HepG2 (cell line): ENCODE measurements at regions of chr6 and their contacts with region 1.

Region 1: GRCh38 chr6:56730663-56731529 is 88.2 kb upstream of the DST start:
- DNase-seq: no peak
- ATAC-seq: no peak
- H3K4me3 ChIP-seq: no peak overlapping the region
- H3K27ac ChIP-seq: peak overlapping the region; percentile 76
- H3K4me1 ChIP-seq: peaks cover 72% of the 10 kb centered on the region
- H3K27me3 ChIP-seq: no peaks in the 10 kb centered on the region
- CTCF ChIP-seq: no peak
- EP300 ChIP-seq: no peak
- POLR2A ChIP-seq: no peak
- RAD21 ChIP-seq: no peak

Region 2: DNA sequence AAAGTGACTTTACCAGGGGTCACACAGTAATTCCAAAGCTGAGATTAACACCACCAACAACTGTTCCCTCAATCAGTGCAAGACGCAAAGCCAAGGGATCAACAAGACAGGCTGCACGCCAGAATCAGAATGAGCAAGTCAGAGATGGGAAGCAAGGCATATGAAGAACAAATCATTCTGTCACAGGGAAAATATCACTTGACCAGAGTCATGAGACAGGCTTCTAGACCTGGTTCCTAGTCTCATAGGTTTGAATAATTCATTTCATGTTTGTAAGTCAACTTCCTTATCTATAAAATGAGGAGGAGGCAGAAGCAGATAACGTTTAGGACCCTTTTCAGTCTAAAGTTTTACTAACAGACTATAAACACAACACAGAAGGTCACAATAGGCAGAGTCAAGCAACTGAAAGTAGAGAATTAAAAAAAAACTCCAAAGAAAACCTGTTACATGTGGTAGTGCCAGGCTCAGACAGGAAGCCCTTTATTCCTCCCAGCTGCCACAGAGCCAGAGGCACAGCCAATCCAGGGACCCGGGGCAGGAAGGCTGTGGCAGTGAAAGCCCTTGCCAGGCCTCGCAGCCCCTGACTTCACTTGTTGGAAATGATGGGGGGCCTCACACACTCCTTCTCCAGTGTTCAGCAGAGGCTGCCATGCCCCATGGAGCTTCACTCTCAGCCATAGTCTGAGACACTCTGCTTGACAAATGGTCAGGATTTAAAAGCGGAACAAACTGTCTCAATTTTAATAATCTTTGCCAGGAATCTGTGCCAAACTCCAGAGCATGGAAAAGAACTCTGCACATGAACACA is 59.0 kb before region 1 on chr6:
- CTCF ChIA-PET with region 1: no interaction called
- POLR2A ChIA-PET with region 1: no interaction called
- in situ Hi-C with region 1: no loop called
- intact Hi-C with region 1: no loop called
- DNase-seq: no peak
- ATAC-seq: no peak
- H3K4me3 ChIP-seq: no peak overlapping the region
- H3K27ac ChIP-seq: no peak overlapping the region
- H3K4me1 ChIP-seq: peaks cover 8% of the 10 kb centered on the region; the same call in 1 of the 2 replicates
- H3K27me3 ChIP-seq: no peaks in the 10 kb centered on the region
- CTCF ChIP-seq: no peak
- EP300 ChIP-seq: no peak
- POLR2A ChIP-seq: no peak
- RAD21 ChIP-seq: no peak

Region 3: DNA sequence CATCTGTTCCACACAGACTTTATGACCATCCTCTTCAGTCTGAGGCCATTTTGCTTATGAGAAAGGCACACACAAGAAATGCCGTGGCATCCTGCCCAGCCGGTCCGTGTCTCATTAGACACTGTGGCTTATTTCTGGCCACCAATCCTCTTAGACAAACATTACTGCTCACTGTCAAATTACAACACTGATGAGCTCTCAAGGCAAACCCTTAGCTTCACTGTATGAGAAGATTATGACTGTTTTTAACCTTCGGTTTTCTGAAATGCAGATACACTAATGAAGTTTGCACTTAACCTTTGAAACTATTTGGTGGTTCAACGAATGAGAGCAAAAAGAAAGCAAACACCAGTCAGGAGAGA is 37.7 kb before region 1 on chr6:
- CTCF ChIA-PET with region 1: no interaction called
- POLR2A ChIA-PET with region 1: interaction called, 12 read pairs
- in situ Hi-C with region 1: no loop called
- intact Hi-C with region 1: no loop called
- DNase-seq: peak; percentile 75
- ATAC-seq: peak; percentile 84
- H3K4me3 ChIP-seq: peak overlapping the region; percentile 56 to 64 (median 60)
- H3K27ac ChIP-seq: peak overlapping the region; percentile 68
- H3K4me1 ChIP-seq: peaks cover 55% of the 10 kb centered on the region
- H3K27me3 ChIP-seq: no peaks in the 10 kb centered on the region
- CTCF ChIP-seq: no peak
- EP300 ChIP-seq: no peak
- POLR2A ChIP-seq: peak in 1 of 2 experiments; percentile 67; a peak in 2 of 4 replicates
- RAD21 ChIP-seq: no peak

Region 4: GRCh38 chr6:56742122-56742791 is 11.4 kb after region 1 on chr6:
- CTCF ChIA-PET with region 1: no interaction called
- POLR2A ChIA-PET with region 1: interaction called, 27 read pairs
- in situ Hi-C with region 1: no loop called
- intact Hi-C with region 1: loop called (anchors 1 kb)
- DNase-seq: peak; percentile 25
- ATAC-seq: peak; percentile 70
- H3K4me3 ChIP-seq: peak overlapping the region; percentile 39 to 56 (median 42)
- H3K27ac ChIP-seq: peak overlapping the region; percentile 32
- H3K4me1 ChIP-seq: peaks cover 52% of the 10 kb centered on the region
- H3K27me3 ChIP-seq: no peaks in the 10 kb centered on the region
- CTCF ChIP-seq: no peak
- EP300 ChIP-seq: 0 out of 4 replicates have a peak, but pooled peaks of 1 of the 2 experiments have one; percentile 2
- POLR2A ChIP-seq: peak in 1 of 2 experiments; percentile 39; a peak in 1 of 4 replicates
- RAD21 ChIP-seq: no peak